Common myeloid progenitor, CD34-positive (primary cell): ENCODE measurements at regions of chr3 and their contacts with region 1.

Region 1: DNA sequence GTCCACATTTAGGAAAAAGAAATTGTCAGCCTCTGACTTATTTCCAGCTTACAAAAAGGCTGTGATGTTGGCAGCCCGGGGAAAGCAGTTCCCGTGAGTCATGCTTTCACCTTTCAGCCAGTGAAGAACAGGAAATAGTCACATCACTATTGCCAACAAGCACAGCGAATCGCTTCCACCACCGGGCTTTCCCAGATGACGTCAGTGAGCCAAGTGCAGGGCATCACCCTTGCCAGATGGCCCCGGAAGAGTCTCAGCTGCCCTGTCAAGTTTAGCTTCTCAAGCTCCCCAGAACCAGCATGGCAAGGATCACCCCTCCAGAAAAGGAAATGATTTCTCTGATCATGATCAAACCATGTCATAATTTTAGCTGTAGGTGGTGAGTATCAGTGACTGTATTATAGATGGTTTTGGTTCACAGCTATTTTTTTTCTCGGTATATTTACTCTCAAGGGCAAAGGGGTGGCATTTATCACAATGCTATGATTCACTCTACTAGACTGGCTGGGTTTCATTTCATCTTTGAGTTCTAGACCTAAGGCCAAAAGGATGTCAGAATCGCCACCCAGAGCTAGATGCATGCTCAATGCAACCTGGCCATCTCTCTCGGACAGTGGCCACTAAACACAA is 32.9 kb downstream of the B3GNT5 start:
- DNase-seq: peak; percentile 93 to 97 (median 96)
- H3K4me3 ChIP-seq: peak overlapping the region in 2 of 7 experiments; percentile 24 to 49
- H3K27ac ChIP-seq: peak overlapping the region in 1 of 2 experiments; percentile 56
- H3K4me1 ChIP-seq: peaks cover 5 to 18% (median 13%) of the 10 kb centered on the region in 4 experiments
- H3K27me3 ChIP-seq: no peaks in the 10 kb centered on the region

Region 2: GRCh38 chr3:182810574-182811268 is 475.2 kb before region 1 on chr3:
- CTCF ChIA-PET with region 1: no interaction called
- POLR2A ChIA-PET with region 1: no interaction called
- DNase-seq: peak in 1 of 3 donors; percentile 13
- H3K4me3 ChIP-seq: no peak overlapping the region
- H3K27ac ChIP-seq: no peak overlapping the region
- H3K4me1 ChIP-seq: peaks cover 0 to 9% (median 3%) of the 10 kb centered on the region in 4 experiments
- H3K27me3 ChIP-seq: no peaks in the 10 kb centered on the region

Region 3: DNA sequence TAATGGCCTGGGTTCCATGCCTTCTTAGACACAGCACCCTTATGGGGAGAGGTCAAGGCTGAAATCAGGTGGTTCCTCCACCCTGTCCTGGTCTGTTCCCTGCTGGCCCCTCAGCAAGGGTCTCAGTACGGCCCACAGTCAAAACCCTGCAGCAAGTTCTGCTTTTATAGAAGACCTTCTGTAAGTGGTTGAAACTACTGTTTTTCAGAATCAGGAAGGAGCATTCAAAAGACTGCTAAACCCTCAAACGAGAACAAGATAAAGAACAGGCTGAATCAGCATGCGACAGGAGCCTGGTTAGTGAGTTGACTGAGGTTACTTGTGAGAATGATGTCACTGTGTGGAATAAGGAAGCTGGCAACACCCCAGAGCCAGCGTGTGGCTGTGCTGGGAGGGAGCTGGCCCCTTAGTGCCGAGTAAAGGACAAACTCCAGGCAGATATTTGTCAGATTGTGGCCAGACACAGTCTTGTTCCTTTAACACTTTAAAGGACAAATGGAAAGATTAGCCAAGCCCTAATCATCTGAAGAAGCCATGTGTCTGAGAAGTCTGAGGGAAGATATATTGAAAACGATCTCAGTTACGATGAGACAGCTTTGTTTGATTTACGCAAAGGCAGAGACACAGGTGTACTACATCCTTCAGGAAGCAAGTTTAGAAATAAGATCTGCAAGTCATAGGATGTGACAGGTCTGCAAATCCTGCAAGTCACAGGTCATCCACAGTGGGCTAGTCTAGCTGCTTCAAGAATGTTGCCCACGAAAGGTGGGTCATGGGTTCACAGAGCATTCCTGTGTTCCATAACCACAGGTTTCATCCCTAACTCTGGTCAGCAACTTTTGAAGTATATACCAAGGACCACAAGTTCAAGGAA is 21.1 kb after region 1 on chr3:
- CTCF ChIA-PET with region 1: interaction called, 16 read pairs
- POLR2A ChIA-PET with region 1: interaction called, 4 read pairs
- DNase-seq: peak; percentile 93 to 98 (median 97)
- H3K4me3 ChIP-seq: peak overlapping the region in 4 of 7 experiments; percentile 10 to 71 (median 48)
- H3K27ac ChIP-seq: peak overlapping the region; percentile 55 to 69
- H3K4me1 ChIP-seq: peaks cover 10 to 34% (median 20%) of the 10 kb centered on the region in 4 experiments
- H3K27me3 ChIP-seq: no peaks in the 10 kb centered on the region